CD4-positive, alpha-beta memory T cell (primary cell): ENCODE measurements at regions of chr3 and their contacts with region 1.

Region 1: GRCh38 chr3:141553055-141553454 is 66.2 kb downstream of the RASA2 start:
- DNase-seq: peak; percentile 68 to 84 (median 78)
- H3K4me3 ChIP-seq: no peak overlapping the region
- H3K4me3 Mint-ChIP-seq: peak overlapping the region in 7 of 8 donors; percentile 6 to 79 (median 57)
- H3K27ac ChIP-seq: no peak overlapping the region
- H3K27ac Mint-ChIP-seq: peak overlapping the region; percentile 77 to 91 (median 85)
- H3K4me1 ChIP-seq: peaks cover 65% of the 10 kb centered on the region
- H3K4me1 Mint-ChIP-seq: peaks cover 46 to 58% (median 52%) of the 10 kb centered on the region in 4 donors
- H3K27me3 ChIP-seq: no peaks in the 10 kb centered on the region
- H3K27me3 Mint-ChIP-seq: no peaks in the 10 kb centered on the region

Region 2: DNA sequence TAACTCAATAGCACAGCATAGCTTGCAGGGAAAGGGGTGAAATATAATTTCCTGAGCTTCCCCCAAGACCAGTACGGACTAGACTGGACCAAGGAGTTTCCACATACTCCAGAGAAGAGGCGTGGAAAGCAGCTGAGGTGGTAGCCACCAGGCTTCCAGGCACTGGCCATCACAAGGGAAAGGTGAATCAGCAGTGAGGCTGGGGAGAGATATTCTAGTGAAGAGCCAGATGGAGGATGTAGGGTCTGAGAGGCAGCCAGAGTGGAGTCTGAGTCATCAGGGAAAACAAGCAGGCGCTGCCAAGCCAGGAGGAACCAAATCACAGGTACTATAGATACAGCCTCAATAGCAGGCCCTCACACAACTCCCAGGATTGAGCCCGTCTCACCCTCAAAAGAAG is 75.8 kb before region 1 on chr3:
- CTCF ChIA-PET with region 1: interaction called, 163 read pairs
- POLR2A ChIA-PET with region 1: interaction called, 4 read pairs
- intact Hi-C with region 1: no loop called
- DNase-seq: no peak
- H3K4me3 ChIP-seq: no peak overlapping the region
- H3K4me3 Mint-ChIP-seq: no peak overlapping the region
- H3K27ac ChIP-seq: no peak overlapping the region
- H3K27ac Mint-ChIP-seq: peak overlapping the region in 1 of 7 donors; percentile 57
- H3K4me1 ChIP-seq: peaks cover 23% of the 10 kb centered on the region
- H3K4me1 Mint-ChIP-seq: peaks cover 13 to 38% (median 26%) of the 10 kb centered on the region in 4 donors
- H3K27me3 ChIP-seq: no peaks in the 10 kb centered on the region
- H3K27me3 Mint-ChIP-seq: no peaks in the 10 kb centered on the region

Region 3: DNA sequence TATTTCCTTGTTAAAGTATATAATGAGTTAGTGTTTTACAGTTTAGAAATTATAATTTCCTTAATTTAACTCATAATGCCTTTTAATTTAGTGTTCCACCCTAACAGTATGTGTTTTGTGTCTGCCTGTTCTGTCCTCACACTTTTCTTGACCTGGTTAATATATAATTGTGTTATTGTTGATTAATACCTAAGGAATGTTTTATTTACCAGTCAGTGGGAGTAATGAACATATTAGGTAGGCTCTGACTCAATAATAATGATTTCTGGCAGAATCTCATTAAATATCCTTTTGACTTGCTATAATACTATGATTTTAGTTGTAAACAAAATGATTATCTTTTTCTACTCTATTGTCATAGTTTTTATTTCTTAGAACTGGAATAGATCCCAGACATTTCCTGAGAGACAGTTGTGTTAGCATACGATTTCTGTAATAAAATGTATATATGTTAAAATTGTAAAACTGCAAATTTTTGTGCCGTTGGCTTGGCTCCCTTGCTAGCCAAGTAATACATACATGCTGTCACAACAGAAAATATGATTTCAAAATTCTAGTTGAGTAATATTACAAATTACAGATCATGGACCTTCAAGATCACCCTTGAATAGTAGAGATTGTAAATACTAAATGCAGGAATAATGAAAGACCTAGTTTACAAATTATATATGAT is 14.4 kb before region 1 on chr3:
- CTCF ChIA-PET with region 1: interaction called, 6 read pairs
- POLR2A ChIA-PET with region 1: interaction called, 15 read pairs
- intact Hi-C with region 1: loop called (anchors 1 kb)
- DNase-seq: no peak
- H3K4me3 ChIP-seq: no peak overlapping the region
- H3K4me3 Mint-ChIP-seq: no peak overlapping the region
- H3K27ac ChIP-seq: no peak overlapping the region
- H3K27ac Mint-ChIP-seq: peak overlapping the region in 3 of 7 donors; percentile 22 to 50 (median 28)
- H3K4me1 ChIP-seq: peaks cover 39% of the 10 kb centered on the region
- H3K4me1 Mint-ChIP-seq: peaks cover 31 to 55% (median 40%) of the 10 kb centered on the region in 4 donors
- H3K27me3 ChIP-seq: no peaks in the 10 kb centered on the region
- H3K27me3 Mint-ChIP-seq: no peaks in the 10 kb centered on the region